Cardiac septum (tissue), 1 donor: ENCODE measurements at regions of chr7 and their contacts with region 1.

Region 1: GRCh38 chr7:12322284-12322902 is 81.3 kb downstream of the VWDE start:
- DNase-seq: no peak

Region 2: GRCh38 chr7:11420049-11420448 is 902.3 kb before region 1 on chr7:
- intact Hi-C with region 1: loop called (anchors 5 kb)
- DNase-seq: no peak

Region 3: DNA sequence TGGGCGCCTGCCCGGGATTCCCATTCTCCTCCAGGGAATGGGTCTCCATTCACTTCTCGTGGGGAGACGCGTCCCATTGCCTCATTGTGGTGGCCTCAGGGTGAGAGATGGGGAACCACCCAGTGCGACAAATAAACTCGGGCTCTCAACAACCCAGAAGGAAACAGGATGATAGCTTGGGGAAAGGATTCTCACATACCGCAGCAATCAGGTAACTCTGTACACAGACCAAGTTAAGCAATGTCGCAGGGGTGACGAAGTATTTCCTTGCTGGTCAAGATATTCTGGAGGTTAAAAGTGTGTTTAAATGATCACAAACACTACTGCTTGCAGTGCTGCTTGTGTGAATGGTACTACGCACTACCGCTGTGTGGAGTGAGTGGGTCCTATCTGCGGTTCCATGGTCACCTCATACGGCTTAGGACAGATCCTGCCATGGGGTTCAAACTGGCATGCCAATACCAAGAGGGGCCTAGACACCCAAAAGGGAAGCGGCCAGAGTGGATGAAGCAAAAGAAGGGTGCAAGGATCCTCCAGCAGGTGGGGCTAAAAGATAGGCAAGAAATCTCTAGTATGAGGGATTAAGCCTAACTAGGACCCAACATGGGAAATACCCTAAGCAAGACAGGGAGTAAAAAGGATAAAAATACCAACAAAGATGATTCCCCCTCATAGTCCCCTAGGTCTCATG is 255.1 kb before region 1 on chr7:
- intact Hi-C with region 1: loop called (anchors 5 kb)
- DNase-seq: no peak